ENCODE measurements at regions of chr1 and their contacts with region 1.

Region 1: GRCh38 chr1:82086739-82087138 is 286.0 kb downstream of the ADGRL2 start:
- DNase-seq: no peak
- H3K4me3 ChIP-seq: no peak overlapping the region
- H3K27ac ChIP-seq: no peak overlapping the region
- H3K4me1 ChIP-seq: no peaks in the 10 kb centered on the region
- CTCF ChIP-seq: no peak

Region 2: GRCh38 chr1:82048596-82048995 is 38.1 kb before region 1 on chr1:
- CTCF ChIA-PET with region 1: no interaction called
- POLR2A ChIA-PET with region 1: no interaction called
- intact Hi-C with region 1: no loop called
- DNase-seq: no peak
- H3K4me3 ChIP-seq: no peak overlapping the region
- H3K27ac ChIP-seq: no peak overlapping the region
- H3K4me1 ChIP-seq: no peaks in the 10 kb centered on the region
- CTCF ChIP-seq: no peak

Region 3: DNA sequence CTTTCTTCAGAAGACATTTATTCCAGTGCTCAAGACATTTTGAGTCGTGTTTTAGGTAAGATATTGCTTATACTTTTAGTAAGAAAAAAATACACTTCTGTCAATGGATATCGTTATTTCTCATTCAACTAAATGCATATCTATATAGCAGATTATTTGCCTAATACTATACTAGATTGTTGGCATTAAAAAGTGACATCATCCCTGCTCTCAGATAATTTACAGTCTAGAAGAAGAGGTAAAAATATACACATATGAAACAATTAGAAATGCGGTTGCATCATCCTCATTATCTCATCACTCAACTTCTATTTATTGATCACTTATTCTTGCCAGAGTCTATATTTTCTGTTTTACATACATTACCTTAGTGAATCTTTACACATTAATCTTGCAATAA is 81.7 kb after region 1 on chr1:
- CTCF ChIA-PET with region 1: no interaction called
- POLR2A ChIA-PET with region 1: no interaction called
- intact Hi-C with region 1: loop called (anchors 5 kb)
- DNase-seq: no peak
- H3K4me3 ChIP-seq: no peak overlapping the region
- H3K27ac ChIP-seq: no peak overlapping the region
- H3K4me1 ChIP-seq: no peaks in the 10 kb centered on the region
- CTCF ChIP-seq: no peak

Region 4: DNA sequence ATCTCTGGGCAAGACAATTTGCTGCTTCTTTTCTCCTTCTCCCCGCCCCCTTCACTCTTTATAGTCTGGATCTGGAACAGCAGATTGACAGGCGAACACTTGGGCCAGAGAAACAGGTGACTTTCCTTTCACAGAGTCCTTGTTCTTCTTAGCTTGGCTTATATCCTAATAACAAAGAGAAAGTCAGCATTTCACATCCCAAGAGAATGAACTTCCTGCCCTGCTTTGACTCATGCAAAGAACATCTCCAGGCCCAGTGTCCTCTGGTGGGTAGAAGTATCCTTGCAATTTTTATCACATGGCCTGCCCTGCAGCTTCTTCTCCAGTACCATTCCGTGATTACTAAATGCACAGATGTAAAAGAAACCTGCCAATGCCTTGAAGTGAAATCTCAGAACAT is 478.4 kb after region 1 on chr1:
- CTCF ChIA-PET with region 1: no interaction called
- POLR2A ChIA-PET with region 1: no interaction called
- intact Hi-C with region 1: no loop called
- DNase-seq: no peak
- H3K4me3 ChIP-seq: no peak overlapping the region
- H3K27ac ChIP-seq: no peak overlapping the region
- H3K4me1 ChIP-seq: peaks cover 18% of the 10 kb centered on the region
- CTCF ChIP-seq: no peak

Measured in OCI-LY7 (cell line).